ENCODE measurements at regions of chr9 and their contacts with region 1.

Region 1: DNA sequence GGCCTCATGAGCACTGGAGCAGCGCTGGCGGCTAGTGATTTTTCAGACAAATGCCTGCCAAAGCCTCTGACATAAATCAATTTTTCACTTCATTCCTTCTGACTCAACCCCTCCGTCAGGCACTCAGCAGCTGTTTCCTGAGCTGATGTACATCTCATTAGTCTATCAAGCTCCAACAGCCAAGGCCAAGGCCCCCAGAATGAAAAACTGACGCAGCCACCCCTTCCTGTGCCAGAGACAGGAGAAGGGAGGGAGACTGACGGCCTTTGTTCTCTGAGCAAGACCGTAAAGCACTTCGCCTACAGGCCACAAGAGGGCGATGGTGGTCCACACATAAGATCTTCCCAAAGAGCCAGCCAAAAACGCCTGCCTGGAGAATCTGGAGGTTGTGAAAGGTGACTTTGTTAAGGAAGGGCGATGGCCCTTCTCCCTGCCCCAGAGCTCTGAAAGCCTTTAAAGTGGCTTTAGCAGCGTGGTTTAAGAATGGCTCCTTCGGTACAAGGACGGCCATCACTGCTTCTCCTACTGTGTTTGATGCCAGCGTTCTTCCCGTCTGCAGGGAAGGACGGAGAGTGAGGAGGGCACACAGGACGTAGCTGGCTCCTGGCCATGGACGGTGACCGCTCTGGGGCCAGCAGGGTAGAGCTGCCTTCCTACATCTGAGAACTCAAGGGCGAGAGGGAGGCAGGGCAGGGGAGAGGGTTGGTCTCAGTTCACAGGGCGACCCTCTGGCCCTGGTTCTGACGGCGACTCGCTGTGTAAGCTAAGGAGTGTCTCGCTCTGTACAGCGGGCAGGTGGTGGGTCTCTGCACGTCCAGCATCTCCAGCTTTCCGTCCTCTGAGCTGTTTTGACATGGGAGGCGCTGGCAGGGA is 37.0 kb downstream of the ALG2 start:
- DNase-seq: peak; percentile 79
- CTCF ChIP-seq: peak; percentile 84

Region 2: GRCh38 chr9:99819856-99820684 is 635.4 kb after region 1 on chr9:
- in situ Hi-C with region 1: loop called (anchors 25 kb)
- DNase-seq: peak; percentile 91
- CTCF ChIP-seq: no peak

Region 3: GRCh38 chr9:100011062-100011681 is 826.5 kb after region 1 on chr9:
- in situ Hi-C with region 1: loop called (anchors 10 kb)
- DNase-seq: peak; percentile 51
- CTCF ChIP-seq: peak; percentile 27

Region 4: DNA sequence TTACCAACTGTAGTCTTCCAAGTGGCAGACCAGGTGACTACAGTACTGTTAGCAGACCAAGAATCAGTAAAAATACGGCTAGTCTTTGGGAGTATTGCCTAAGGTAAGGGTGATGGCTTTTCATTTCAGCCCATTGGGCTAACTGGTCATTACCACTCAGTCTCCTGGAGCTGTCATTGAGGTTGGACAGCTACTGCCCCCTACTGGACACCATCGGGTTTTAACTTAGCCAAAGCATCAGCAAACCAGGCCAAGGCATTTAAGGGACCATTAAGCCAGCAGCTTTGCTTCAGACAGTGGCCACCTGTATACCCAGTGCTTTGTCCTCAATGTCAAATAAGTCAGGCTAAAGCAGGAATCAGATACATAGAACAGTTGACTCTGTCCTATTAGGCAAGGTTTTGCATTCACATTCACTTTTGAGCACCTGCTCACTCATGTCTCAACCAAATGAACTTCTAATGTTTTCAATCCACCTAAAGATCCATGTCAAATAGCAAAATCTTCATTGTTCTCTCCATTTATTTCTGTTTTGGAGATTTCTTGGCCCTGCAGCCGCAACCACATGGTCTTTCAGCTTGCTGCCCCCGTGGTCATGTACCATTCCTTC is 1031.6 kb after region 1 on chr9:
- in situ Hi-C with region 1: loop called (anchors 25 kb)
- DNase-seq: peak; percentile 42
- CTCF ChIP-seq: peak; percentile 61

Region 5: GRCh38 chr9:100322954-100323536 is 1138.3 kb after region 1 on chr9:
- in situ Hi-C with region 1: loop called (anchors 25 kb)
- DNase-seq: peak; percentile 11
- CTCF ChIP-seq: peak; percentile 57